ENCODE measurements at regions of chr20 and their contacts with region 1.

Region 1: GRCh38 chr20:53623454-53624211 is 30.0 kb upstream of the ZNF217 start:
- H3K4me3 ChIP-seq: peak overlapping the region; percentile 21
- H3K27ac ChIP-seq: peak overlapping the region; percentile 83
- H3K4me1 ChIP-seq: peaks cover 20% of the 10 kb centered on the region
- CTCF ChIP-seq: no peak

Region 2: GRCh38 chr20:53493311-53493864 is 130.2 kb before region 1 on chr20:
- CTCF ChIA-PET with region 1: no interaction called
- POLR2A ChIA-PET with region 1: no interaction called
- H3K4me3 ChIP-seq: no peak overlapping the region
- H3K27ac ChIP-seq: no peak overlapping the region
- H3K4me1 ChIP-seq: no peaks in the 10 kb centered on the region
- CTCF ChIP-seq: no peak

Region 3: DNA sequence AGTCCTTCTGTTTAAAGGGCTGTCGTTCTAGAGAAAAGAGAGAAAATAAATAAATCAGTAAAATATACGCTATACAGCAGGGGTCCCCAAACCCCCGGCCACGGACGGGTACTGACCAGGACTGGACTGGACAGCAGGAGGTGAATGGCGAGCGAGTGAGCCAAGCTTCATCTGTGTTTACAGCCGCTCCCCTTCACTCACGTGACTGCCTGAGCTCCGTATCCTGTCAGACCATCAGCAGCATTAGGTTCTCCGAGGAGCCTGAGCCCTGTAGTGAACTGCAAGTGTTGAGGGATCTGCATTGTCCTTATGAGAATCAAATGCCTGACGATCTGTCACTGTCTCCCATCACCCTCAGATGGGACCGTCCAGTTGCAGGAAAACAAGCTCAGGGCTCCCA is 106.5 kb before region 1 on chr20:
- CTCF ChIA-PET with region 1: no interaction called
- POLR2A ChIA-PET with region 1: no interaction called
- H3K4me3 ChIP-seq: no peak overlapping the region
- H3K27ac ChIP-seq: no peak overlapping the region
- H3K4me1 ChIP-seq: no peaks in the 10 kb centered on the region
- CTCF ChIP-seq: no peak

Region 4: DNA sequence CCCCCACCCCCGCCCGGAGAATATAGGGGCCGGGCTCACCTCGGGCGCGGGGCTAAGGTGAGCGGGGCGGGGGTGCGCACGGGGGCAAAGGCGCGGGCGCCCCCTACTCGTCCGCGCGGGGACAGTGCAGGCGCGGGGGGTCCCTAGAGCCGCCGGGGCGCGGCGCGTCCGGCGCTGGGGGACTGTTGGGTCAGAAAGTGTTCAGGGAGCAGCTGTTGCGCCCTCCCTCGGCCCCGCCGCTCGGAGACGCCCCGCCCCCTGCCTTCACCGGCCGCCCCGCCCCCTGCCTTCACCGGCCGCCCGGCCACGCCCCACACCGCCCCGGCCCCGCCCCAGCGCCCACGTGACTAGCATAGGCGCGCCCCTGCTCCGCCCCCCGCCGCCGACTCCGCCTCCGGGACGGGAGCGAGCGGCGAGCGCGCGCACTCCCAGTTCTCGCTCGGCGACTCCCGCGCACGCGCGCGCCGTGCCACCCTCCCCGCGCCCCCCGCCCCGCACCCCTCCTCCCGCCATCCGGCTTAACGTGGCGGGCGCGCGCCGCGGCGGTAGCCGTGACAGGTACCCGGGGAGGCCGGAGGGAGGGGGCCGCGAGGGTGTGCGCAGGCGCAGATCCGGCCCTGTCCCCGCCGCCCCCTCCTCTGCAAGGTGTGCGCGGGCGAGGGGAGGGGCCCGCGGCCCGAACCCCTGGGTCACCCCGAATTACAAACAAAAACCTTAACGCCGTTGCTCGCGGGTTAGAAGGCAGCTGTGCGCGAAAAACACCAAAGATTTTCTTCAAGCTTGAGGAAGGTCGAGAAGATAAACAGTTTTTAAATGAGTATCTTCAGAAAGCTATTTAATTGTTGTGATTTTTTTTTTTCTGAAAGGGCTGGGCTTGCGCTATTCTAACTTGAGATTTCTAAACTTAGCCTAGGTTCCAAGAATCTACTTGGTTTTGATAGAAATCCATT is 29.3 kb before region 1 on chr20:
- CTCF ChIA-PET with region 1: no interaction called
- POLR2A ChIA-PET with region 1: interaction called, 10 read pairs
- H3K4me3 ChIP-seq: peak overlapping the region; percentile 80
- H3K27ac ChIP-seq: peak overlapping the region; percentile 61; the same call in 1 of the 2 replicates
- H3K4me1 ChIP-seq: peaks cover 17% of the 10 kb centered on the region
- CTCF ChIP-seq: peak; percentile 19; the same call in 1 of the 2 replicates